ENCODE measurements at regions of chr11 and their contacts with region 1.

Region 1: GRCh38 chr11:59171508-59172322 is at the start of gene DTX4:
- DNase-seq: peak; percentile 95
- H3K4me3 ChIP-seq: peak within 1 kb of the TSS; percentile 78 to 91 (median 82)
- H3K27ac ChIP-seq: peak within 1 kb of the TSS; percentile 86 to 93 (median 88)
- H3K4me1 ChIP-seq: peaks cover 0 to 33% (median 21%) of the 10 kb centered on the region in 4 donors
- H3K27me3 ChIP-seq: no peaks in the 10 kb centered on the region
- CTCF ChIP-seq: peak; percentile 78 to 98 (median 87)
- EP300 ChIP-seq: no peak
- POLR2A ChIP-seq: peak; percentile 59
- total RNA-seq, gene DTX4: 61.3 to 95.3 (median 77.6) TPM

Region 2: GRCh38 chr11:59207988-59208451 is 36.3 kb after region 1 on chr11:
- in situ Hi-C with region 1: no loop called
- intact Hi-C with region 1: loop called (anchors 1 kb)
- DNase-seq: no peak
- H3K4me3 ChIP-seq: peak overlapping the region in 1 of 4 donors; percentile 24
- H3K27ac ChIP-seq: peak overlapping the region in 3 of 4 donors; percentile 22 to 36 (median 34)
- H3K4me1 ChIP-seq: peaks cover 0 to 11% (median 4%) of the 10 kb centered on the region in 4 donors
- H3K27me3 ChIP-seq: no peaks in the 10 kb centered on the region
- CTCF ChIP-seq: peak; percentile 65 to 83 (median 72)
- EP300 ChIP-seq: no peak
- POLR2A ChIP-seq: no peak

Region 3: DNA sequence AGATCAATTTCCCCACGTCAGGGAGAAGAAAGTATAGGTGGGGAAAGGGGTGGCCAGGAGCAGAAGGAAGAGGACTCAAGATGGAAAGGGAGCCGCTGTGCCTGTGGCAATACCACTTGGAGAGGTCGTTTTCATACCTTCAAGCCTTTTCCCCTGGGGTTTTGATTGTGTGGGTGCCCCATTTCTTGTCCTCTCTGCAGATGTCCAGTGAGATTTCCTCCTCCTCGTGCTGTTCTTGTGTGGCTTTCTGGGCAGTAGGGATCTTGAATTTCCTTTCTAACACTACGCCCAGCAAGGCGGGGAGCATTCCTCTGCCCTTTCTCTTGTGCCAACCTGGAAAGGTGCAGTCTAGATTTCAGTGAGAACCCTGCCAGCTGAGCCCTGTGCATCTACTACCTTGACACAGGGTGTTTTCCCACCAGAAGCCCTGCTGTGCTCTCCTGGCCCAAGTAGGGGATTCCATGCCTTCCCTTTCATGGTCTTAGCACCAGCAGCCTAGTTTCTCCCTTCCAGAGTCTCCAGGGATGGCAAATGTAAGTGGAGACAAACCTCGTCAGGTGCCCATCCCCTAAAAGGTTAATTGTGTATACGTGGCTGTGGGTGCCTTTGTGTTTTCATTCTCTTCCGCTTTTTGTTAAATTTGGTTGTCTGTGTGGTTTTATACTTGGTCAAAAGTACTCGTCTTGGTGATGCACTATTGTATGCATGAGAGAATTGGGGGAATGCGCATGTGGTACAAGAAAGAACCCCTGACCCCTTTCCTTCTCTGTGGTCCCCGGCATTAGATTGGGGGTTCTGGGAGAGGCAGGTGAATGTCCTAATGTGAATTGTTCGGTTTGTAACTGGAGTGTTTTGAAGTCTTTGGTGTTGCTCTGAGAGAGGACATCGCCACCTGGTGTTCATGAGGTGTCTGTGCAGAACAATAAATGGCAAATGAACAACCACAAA is 112.4 kb after region 1 on chr11:
- in situ Hi-C with region 1: loop called in 2 of 4 experiments (anchors 10 to 25 kb)
- intact Hi-C with region 1: loop called (anchors 2 kb)
- DNase-seq: peak; percentile 45
- H3K4me3 ChIP-seq: no peak overlapping the region
- H3K27ac ChIP-seq: no peak overlapping the region
- H3K4me1 ChIP-seq: no peaks in the 10 kb centered on the region
- H3K27me3 ChIP-seq: peaks cover 3% of the 10 kb centered on the region
- CTCF ChIP-seq: peak; percentile 80 to 86 (median 83)
- EP300 ChIP-seq: no peak
- POLR2A ChIP-seq: no peak

Region 4: DNA sequence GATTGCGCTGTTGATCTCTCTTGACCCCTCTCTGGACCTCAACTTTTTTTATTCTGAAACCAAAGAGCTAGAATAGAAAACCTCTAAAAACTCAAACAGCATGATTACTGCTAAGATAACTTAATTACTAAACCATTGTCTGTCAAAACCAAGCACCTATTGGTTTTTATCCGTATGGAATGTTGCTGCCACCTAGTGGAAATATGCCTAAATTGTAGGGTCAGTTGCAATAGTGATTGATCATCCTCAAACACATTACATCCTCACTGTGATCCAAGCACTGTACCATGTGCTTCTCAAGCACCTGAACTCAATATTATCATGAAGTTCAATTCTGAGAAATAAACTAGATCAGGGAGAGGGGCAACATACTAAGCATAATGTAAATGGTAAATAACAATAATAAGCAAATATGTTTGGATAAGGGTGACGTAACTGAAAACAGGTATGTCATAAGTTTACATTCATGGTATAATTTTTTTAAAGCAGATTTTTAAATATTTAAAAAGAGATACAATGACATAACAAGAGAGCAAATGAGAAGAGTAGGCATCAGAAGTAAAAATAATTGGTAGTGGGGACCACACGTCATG is 258.3 kb after region 1 on chr11:
- in situ Hi-C with region 1: loop called in 2 of 4 experiments (anchors 10 to 25 kb)
- intact Hi-C with region 1: no loop called
- DNase-seq: no peak
- H3K4me3 ChIP-seq: no peak overlapping the region
- H3K27ac ChIP-seq: no peak overlapping the region
- H3K4me1 ChIP-seq: no peaks in the 10 kb centered on the region
- H3K27me3 ChIP-seq: peaks cover 7% of the 10 kb centered on the region
- CTCF ChIP-seq: peak; percentile 59 to 71 (median 65)
- EP300 ChIP-seq: no peak
- POLR2A ChIP-seq: no peak

Region 5: GRCh38 chr11:59680287-59681154 is 508.8 kb after region 1 on chr11:
- in situ Hi-C with region 1: no loop called
- intact Hi-C with region 1: loop called (anchors 10 kb)
- DNase-seq: peak; percentile 75
- H3K4me3 ChIP-seq: no peak overlapping the region
- H3K27ac ChIP-seq: peak overlapping the region; percentile 50 to 68 (median 57)
- H3K4me1 ChIP-seq: peaks cover 0 to 25% (median 8%) of the 10 kb centered on the region in 4 donors
- H3K27me3 ChIP-seq: no peaks in the 10 kb centered on the region
- CTCF ChIP-seq: peak; percentile 63 to 74 (median 73)
- EP300 ChIP-seq: no peak
- POLR2A ChIP-seq: no peak